Mammary epithelial cell (primary cell): ENCODE measurements at regions of chr1 and their contacts with region 1.

Region 1: DNA sequence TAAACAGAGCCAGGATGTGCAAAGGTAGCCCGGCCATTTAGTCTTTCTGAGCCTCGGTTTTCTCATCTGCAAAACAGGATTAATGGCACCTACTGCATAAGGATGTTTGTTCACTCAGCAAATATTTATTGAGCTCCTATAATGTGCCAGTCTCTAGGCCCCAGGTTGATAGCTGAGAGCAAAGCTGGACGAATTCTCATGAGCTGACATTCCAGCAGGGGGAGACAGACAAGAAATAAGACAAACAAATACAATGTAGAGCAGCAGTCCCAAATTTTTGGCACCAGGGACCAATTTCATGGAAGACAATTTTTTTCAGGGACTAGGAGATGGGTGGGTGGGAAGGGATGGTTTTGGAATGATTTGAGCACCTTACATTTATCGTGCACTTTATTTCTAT is 74.3 kb upstream of the PAX7 start:
- DNase-seq: no peak
- H3K4me3 ChIP-seq: no peak overlapping the region
- H3K27ac ChIP-seq: no peak overlapping the region
- H3K4me1 ChIP-seq: no peaks in the 10 kb centered on the region
- H3K27me3 ChIP-seq: peaks cover 5% of the 10 kb centered on the region
- CTCF ChIP-seq: peak; percentile 33 to 47

Region 2: GRCh38 chr1:18529714-18530113 is 26.6 kb before region 1 on chr1:
- CTCF ChIA-PET with region 1: no interaction called
- dilution Hi-C with region 1: no loop called
- in situ Hi-C with region 1: no loop called
- intact Hi-C with region 1: no loop called
- DNase-seq: no peak
- H3K4me3 ChIP-seq: no peak overlapping the region
- H3K27ac ChIP-seq: no peak overlapping the region
- H3K4me1 ChIP-seq: no peaks in the 10 kb centered on the region
- H3K27me3 ChIP-seq: no peaks in the 10 kb centered on the region
- CTCF ChIP-seq: no peak

Region 3: GRCh38 chr1:18606443-18607288 is 50.3 kb after region 1 on chr1:
- CTCF ChIA-PET with region 1: no interaction called
- dilution Hi-C with region 1: no loop called
- in situ Hi-C with region 1: no loop called
- intact Hi-C with region 1: no loop called
- DNase-seq: no peak
- H3K4me3 ChIP-seq: no peak overlapping the region
- H3K27ac ChIP-seq: no peak overlapping the region
- H3K4me1 ChIP-seq: no peaks in the 10 kb centered on the region
- H3K27me3 ChIP-seq: no peaks in the 10 kb centered on the region
- CTCF ChIP-seq: no peak

Region 4: GRCh38 chr1:18618546-18619466 is 62.4 kb after region 1 on chr1:
- CTCF ChIA-PET with region 1: interaction called, 10 read pairs
- dilution Hi-C with region 1: no loop called
- in situ Hi-C with region 1: no loop called
- intact Hi-C with region 1: no loop called
- DNase-seq: peak; percentile 67
- H3K4me3 ChIP-seq: no peak overlapping the region
- H3K27ac ChIP-seq: no peak overlapping the region
- H3K4me1 ChIP-seq: peaks cover 10% of the 10 kb centered on the region
- H3K27me3 ChIP-seq: peaks cover 2% of the 10 kb centered on the region
- CTCF ChIP-seq: no peak